ENCODE measurements at regions of chr7 and their contacts with region 1.

Region 1: GRCh38 chr7:156949541-156950380 is at the start of gene NOM1:
- DNase-seq: peak; percentile 85 to 96 (median 92)
- ATAC-seq: peak; percentile 94
- H3K4me3 ChIP-seq: peak within 1 kb of the TSS; percentile 95 to 97
- H3K4me3 Mint-ChIP-seq: peak within 1 kb of the TSS; percentile 97
- H3K27ac ChIP-seq: peak within 1 kb of the TSS; percentile 64 to 77
- H3K27ac Mint-ChIP-seq: peak within 1 kb of the TSS; percentile 79
- H3K4me1 ChIP-seq: peaks cover 25% of the 10 kb centered on the region
- H3K4me1 Mint-ChIP-seq: peaks cover 32% of the 10 kb centered on the region
- H3K27me3 ChIP-seq: no peaks in the 10 kb centered on the region
- H3K27me3 Mint-ChIP-seq: peaks cover 9% of the 10 kb centered on the region
- CTCF ChIP-seq: peak; percentile 67
- total RNA-seq, gene NOM1: 35.2 to 50.9 TPM

Region 2: GRCh38 chr7:156827587-156828203 is 122.1 kb before region 1 on chr7:
- CTCF ChIA-PET with region 1: no interaction called
- POLR2A ChIA-PET with region 1: no interaction called
- intact Hi-C with region 1: loop called in 1 of 2 experiments (anchors 5 kb)
- DNase-seq: peak in 2 of 9 experiments; percentile 20 to 37
- ATAC-seq: no peak
- H3K4me3 ChIP-seq: no peak overlapping the region
- H3K4me3 Mint-ChIP-seq: no peak overlapping the region
- H3K27ac ChIP-seq: no peak overlapping the region
- H3K27ac Mint-ChIP-seq: no peak overlapping the region
- H3K4me1 ChIP-seq: no peaks in the 10 kb centered on the region
- H3K4me1 Mint-ChIP-seq: no peaks in the 10 kb centered on the region
- H3K27me3 ChIP-seq: no peaks in the 10 kb centered on the region
- H3K27me3 Mint-ChIP-seq: no peaks in the 10 kb centered on the region
- CTCF ChIP-seq: peak; percentile 68

Region 3: DNA sequence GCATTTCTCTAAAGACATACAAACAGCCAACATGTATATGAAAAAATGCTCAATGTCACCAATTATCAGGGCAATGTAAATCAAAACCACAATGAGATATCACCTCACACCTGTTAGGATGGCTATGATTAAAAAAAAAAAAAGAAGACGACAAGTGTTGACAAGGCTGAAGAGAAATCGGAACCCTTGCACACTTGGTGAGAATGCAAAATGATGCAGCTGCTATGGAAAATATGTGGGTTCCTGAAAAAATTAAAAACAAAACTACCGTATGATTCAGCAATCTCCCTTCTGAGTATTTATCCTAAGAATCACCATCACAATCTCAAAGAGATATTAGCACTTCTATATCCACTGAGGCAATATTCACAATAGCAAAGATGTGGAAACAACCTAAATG is 68.1 kb before region 1 on chr7:
- CTCF ChIA-PET with region 1: no interaction called
- POLR2A ChIA-PET with region 1: no interaction called
- intact Hi-C with region 1: no loop called
- DNase-seq: no peak
- ATAC-seq: no peak
- H3K4me3 ChIP-seq: no peak overlapping the region
- H3K4me3 Mint-ChIP-seq: no peak overlapping the region
- H3K27ac ChIP-seq: no peak overlapping the region
- H3K27ac Mint-ChIP-seq: no peak overlapping the region
- H3K4me1 ChIP-seq: no peaks in the 10 kb centered on the region
- H3K4me1 Mint-ChIP-seq: peaks cover 77% of the 10 kb centered on the region
- H3K27me3 ChIP-seq: no peaks in the 10 kb centered on the region
- H3K27me3 Mint-ChIP-seq: no peaks in the 10 kb centered on the region
- CTCF ChIP-seq: no peak

Region 4: DNA sequence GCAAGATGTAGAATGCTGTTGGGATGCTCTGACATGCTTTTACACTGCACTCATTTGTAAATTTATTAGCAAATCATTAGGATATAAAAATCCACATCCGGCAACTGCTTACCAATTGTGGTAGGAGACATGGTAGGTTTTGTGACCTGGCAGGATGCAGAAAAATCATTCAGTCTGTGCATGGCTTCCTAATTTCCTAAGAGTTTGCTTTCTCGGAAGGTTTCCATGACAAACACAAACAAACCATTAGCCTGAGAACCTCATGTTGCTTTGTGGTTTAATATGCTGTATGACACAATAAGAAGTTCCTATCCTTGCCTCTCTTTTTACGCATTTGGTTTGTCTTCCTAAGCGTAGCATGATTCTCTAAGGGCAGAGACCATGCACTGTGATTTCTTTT is 42.1 kb before region 1 on chr7:
- CTCF ChIA-PET with region 1: interaction called, 5 read pairs
- POLR2A ChIA-PET with region 1: no interaction called
- intact Hi-C with region 1: loop called in 1 of 2 experiments (anchors 1 kb)
- DNase-seq: no peak
- ATAC-seq: no peak
- H3K4me3 ChIP-seq: no peak overlapping the region
- H3K4me3 Mint-ChIP-seq: no peak overlapping the region
- H3K27ac ChIP-seq: no peak overlapping the region
- H3K27ac Mint-ChIP-seq: no peak overlapping the region
- H3K4me1 ChIP-seq: peaks cover 16% of the 10 kb centered on the region
- H3K4me1 Mint-ChIP-seq: peaks cover 15% of the 10 kb centered on the region
- H3K27me3 ChIP-seq: no peaks in the 10 kb centered on the region
- H3K27me3 Mint-ChIP-seq: peaks cover 5% of the 10 kb centered on the region
- CTCF ChIP-seq: no peak

Region 5: GRCh38 chr7:156927571-156928405 is 22.0 kb before region 1 on chr7:
- CTCF ChIA-PET with region 1: interaction called, 7 read pairs
- POLR2A ChIA-PET with region 1: interaction called, 4 read pairs
- intact Hi-C with region 1: loop called (anchors 1 kb)
- DNase-seq: no peak
- ATAC-seq: no peak
- H3K4me3 ChIP-seq: no peak overlapping the region
- H3K4me3 Mint-ChIP-seq: no peak overlapping the region
- H3K27ac ChIP-seq: no peak overlapping the region
- H3K27ac Mint-ChIP-seq: peak overlapping the region; percentile 23
- H3K4me1 ChIP-seq: peaks cover 17% of the 10 kb centered on the region
- H3K4me1 Mint-ChIP-seq: peaks cover 33% of the 10 kb centered on the region
- H3K27me3 ChIP-seq: no peaks in the 10 kb centered on the region
- H3K27me3 Mint-ChIP-seq: peaks cover 4% of the 10 kb centered on the region
- CTCF ChIP-seq: no peak

Region 6: GRCh38 chr7:157138424-157139110 is 188.8 kb after region 1 on chr7 and contains the start of gene UBE3C:
- CTCF ChIA-PET with region 1: no interaction called
- POLR2A ChIA-PET with region 1: no interaction called
- intact Hi-C with region 1: loop called (anchors 1 kb)
- DNase-seq: peak; percentile 81 to 97 (median 89)
- ATAC-seq: peak; percentile 85
- H3K4me3 ChIP-seq: peak within 1 kb of the TSS; percentile 57 to 59
- H3K4me3 Mint-ChIP-seq: peak within 1 kb of the TSS; percentile 84
- H3K27ac ChIP-seq: peak within 1 kb of the TSS; percentile 76 to 88
- H3K27ac Mint-ChIP-seq: peak within 1 kb of the TSS; percentile 94
- H3K4me1 ChIP-seq: peaks cover 38% of the 10 kb centered on the region
- H3K4me1 Mint-ChIP-seq: peaks cover 41% of the 10 kb centered on the region
- H3K27me3 ChIP-seq: no peaks in the 10 kb centered on the region
- H3K27me3 Mint-ChIP-seq: no peaks in the 10 kb centered on the region
- CTCF ChIP-seq: no peak
- total RNA-seq, gene UBE3C: 25.3 to 28.8 TPM

Region 7: GRCh38 chr7:157386979-157387800 is 437.4 kb after region 1 on chr7:
- CTCF ChIA-PET with region 1: no interaction called
- POLR2A ChIA-PET with region 1: no interaction called
- intact Hi-C with region 1: loop called in 1 of 2 experiments (anchors 1 kb)
- DNase-seq: peak; percentile 76 to 93 (median 89)
- ATAC-seq: peak; percentile 94
- H3K4me3 ChIP-seq: no peak overlapping the region
- H3K4me3 Mint-ChIP-seq: peak overlapping the region; percentile 1
- H3K27ac ChIP-seq: peak overlapping the region in 1 of 2 experiments; percentile 45
- H3K27ac Mint-ChIP-seq: peak overlapping the region; percentile 58
- H3K4me1 ChIP-seq: peaks cover 26% of the 10 kb centered on the region
- H3K4me1 Mint-ChIP-seq: peaks cover 41% of the 10 kb centered on the region
- H3K27me3 ChIP-seq: no peaks in the 10 kb centered on the region
- H3K27me3 Mint-ChIP-seq: no peaks in the 10 kb centered on the region
- CTCF ChIP-seq: peak; percentile 93